GM10248 (cell line): ENCODE measurements at regions of chr18 and their contacts with region 1.

Region 1: DNA sequence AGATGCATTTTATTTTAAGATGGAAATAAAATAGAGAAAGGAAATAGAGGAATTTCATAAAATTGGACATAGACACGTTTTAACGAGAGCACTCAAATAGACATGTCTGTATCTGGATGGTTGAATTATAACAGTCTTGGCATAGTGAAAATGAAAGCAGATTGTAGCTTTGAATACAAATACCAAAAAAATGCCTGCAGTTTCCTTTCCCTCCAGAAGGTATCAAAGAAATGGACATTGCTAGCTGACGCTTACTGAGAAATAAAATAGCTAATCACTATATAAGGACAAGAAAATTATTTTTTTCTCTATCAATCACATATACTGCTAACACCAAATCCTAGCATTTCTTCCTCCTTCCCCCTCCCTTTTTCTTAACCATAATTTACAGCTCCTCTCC is 11.4 kb upstream of the MAPRE2 start:
- DNase-seq: peak; percentile 36
- CTCF ChIP-seq: no peak

Region 2: DNA sequence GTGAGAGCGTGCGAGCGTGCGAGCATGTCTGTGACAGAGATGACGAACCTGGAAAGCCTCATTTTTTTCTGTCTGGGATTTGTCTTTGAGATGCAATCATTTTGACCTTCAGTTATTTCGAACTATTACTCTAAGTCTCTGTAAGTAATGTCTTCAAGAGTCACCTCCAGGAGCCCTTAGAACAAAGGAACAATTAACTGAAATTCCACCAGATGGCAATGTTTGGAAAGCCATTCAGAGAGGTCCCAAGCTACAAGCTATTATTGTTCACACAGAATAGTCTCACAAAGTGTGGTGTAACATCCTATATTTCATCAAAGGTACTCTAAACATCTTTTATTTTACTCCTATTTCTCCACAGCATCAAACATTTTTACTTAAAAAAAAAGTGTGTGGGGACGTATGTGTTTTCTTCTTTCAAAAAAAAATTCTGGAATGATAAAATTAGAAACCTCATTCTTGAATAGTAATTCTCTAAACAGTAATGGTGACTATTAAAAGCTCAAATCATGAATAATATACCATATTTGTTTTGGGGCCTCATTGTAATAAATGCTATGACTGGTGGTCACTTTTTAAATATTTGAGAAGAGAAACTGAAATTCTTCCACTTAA is 23.7 kb before region 1 on chr18:
- CTCF ChIA-PET with region 1: interaction called, 18 read pairs
- POLR2A ChIA-PET with region 1: no interaction called
- DNase-seq: peak; percentile 60
- CTCF ChIP-seq: peak; percentile 56

Region 3: DNA sequence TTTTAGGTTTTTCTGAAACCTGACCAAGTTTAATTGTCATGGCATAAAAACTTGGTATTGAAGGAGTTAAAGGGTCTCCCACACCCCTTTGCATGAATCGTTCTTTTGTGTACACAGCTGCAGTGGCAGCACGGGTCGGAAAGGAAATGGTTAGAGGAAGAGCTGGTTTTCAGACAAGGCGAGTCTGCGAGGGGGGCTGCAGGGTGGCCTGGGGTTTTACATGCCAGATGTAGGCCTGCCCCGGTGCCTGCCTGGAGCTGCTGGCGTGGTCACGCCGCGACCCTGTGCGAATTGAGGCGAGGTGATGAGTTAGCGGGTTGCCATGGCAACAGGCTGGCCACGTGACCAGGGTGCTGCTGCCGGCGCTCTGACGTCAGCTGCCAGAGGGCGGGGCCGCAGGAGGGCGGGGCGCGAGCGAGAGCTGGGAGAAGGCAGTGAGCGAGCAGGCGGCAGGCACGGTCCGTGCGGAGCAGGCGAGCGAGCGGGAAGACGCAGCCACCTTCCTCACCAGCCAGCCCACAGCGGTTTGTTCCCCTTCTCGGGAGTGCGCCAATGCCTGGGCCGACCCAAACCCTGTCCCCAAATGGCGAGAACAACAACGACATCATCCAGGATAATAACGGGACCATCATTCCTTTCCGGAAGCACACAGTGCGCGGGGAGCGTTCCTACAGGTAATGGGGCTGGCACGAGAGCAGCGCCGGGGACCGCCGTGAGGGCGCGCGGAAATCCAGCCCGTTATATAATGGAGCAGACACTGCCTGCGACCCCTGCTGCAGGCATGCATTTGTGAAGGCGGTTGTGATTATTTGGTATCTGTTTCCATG is 11.4 kb after region 1 on chr18 and contains the start of gene MAPRE2:
- CTCF ChIA-PET with region 1: interaction called, 80 read pairs
- POLR2A ChIA-PET with region 1: interaction called, 3 read pairs
- DNase-seq: peak; percentile 98
- CTCF ChIP-seq: no peak

Region 4: DNA sequence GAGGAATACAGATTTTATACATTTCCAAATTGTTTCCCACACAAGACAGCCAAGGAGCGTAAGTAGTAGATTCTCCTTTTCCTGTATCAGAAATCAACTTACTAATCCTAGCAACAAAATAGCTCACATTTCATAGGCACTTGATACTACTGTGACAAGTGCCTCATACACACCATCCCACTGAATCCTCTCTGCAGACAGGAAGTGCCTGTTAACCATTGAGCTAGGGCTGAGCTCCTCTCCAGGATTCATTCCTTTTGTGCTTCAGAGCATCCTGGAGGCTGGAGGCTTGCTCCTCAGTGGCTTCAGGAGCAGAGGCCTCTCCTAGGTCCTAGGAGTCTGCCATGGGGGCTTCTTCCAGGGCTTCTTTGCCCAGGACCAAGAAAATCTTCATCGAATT is 368.2 kb after region 1 on chr18:
- CTCF ChIA-PET with region 1: no interaction called
- POLR2A ChIA-PET with region 1: no interaction called
- DNase-seq: no peak
- CTCF ChIP-seq: no peak